Mammary epithelial cell (primary cell): ENCODE measurements at regions of chr19 and their contacts with region 1.

Region 1: GRCh38 chr19:32287811-32288227 is 57.6 kb upstream of the ZNF507 start:
- DNase-seq: peak; percentile 29
- H3K4me3 ChIP-seq: no peak overlapping the region
- H3K27ac ChIP-seq: no peak overlapping the region
- H3K4me1 ChIP-seq: no peaks in the 10 kb centered on the region
- H3K27me3 ChIP-seq: no peaks in the 10 kb centered on the region
- CTCF ChIP-seq: peak; percentile 10 to 32

Region 2: DNA sequence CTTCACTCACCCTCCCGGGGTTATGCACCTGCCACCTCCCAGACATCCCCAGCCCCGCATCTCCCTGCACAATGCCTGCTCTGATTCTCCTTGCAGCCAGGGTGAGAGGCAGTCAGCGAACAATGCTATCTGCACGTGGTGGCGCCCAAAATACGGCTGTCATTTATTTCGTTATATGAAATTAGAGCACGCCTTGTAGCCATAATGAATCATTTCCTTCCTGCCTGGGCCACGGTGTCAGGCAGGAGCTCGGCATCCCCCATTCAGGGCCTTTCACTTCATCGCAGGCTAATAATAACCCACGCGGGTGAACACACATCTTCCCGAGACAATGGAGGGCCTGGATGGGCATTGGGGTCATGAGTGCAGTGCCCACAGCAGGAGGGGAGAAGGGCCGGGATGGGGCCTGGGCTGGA is 86.2 kb before region 1 on chr19:
- CTCF ChIA-PET with region 1: no interaction called
- dilution Hi-C with region 1: no loop called
- in situ Hi-C with region 1: no loop called
- intact Hi-C with region 1: no loop called
- DNase-seq: no peak
- H3K4me3 ChIP-seq: no peak overlapping the region
- H3K27ac ChIP-seq: no peak overlapping the region
- H3K4me1 ChIP-seq: no peaks in the 10 kb centered on the region
- H3K27me3 ChIP-seq: no peaks in the 10 kb centered on the region
- CTCF ChIP-seq: no peak

Region 3: GRCh38 chr19:32373585-32374295 is 85.9 kb after region 1 on chr19:
- CTCF ChIA-PET with region 1: no interaction called
- dilution Hi-C with region 1: loop called (anchors 5 kb)
- in situ Hi-C with region 1: no loop called
- intact Hi-C with region 1: no loop called
- DNase-seq: peak; percentile 96
- H3K4me3 ChIP-seq: no peak overlapping the region
- H3K27ac ChIP-seq: peak overlapping the region; percentile 29
- H3K4me1 ChIP-seq: peaks cover 18% of the 10 kb centered on the region
- H3K27me3 ChIP-seq: no peaks in the 10 kb centered on the region
- CTCF ChIP-seq: no peak